ENCODE measurements at regions of chr12 and their contacts with region 1.

Region 1: DNA sequence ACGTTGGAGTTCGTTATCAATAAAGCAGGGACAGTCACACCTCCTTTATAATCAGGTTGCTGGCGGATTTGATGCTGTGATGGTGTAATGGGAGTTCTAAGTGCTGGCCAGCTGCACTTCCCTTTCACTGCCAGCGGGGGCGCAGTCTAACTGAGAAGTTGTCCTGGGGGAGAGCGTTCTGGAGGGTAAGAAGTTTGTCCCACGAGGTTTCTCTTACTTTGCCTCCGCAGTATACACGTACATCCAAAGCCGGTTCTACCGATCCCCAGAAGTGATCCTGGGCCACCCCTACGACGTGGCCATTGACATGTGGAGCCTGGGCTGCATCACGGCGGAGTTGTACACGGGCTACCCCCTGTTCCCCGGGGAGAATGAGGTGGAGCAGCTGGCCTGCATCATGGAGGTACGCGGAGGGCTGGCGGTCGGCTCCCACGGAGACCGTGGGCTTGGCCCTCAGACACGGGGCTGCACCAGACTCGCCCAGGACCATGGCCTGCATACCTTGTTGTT is 42.7 kb downstream of the DYRK4 start:
- DNase-seq: peak; percentile 89
- ATAC-seq: peak; percentile 96
- H3K4me3 Mint-ChIP-seq: peak overlapping the region; percentile 98
- H3K27ac Mint-ChIP-seq: peak overlapping the region; percentile 87
- H3K4me1 Mint-ChIP-seq: peaks cover 16% of the 10 kb centered on the region
- H3K27me3 Mint-ChIP-seq: peaks cover 17% of the 10 kb centered on the region

Region 2: GRCh38 chr12:4068981-4069669 is 535.6 kb before region 1 on chr12:
- CTCF ChIA-PET with region 1: no interaction called
- DNase-seq: no peak
- ATAC-seq: no peak
- H3K4me3 Mint-ChIP-seq: no peak overlapping the region
- H3K27ac Mint-ChIP-seq: no peak overlapping the region
- H3K4me1 Mint-ChIP-seq: peaks cover 5% of the 10 kb centered on the region
- H3K27me3 Mint-ChIP-seq: peaks cover 9% of the 10 kb centered on the region

Region 3: GRCh38 chr12:4518106-4518728 is 86.5 kb before region 1 on chr12:
- CTCF ChIA-PET with region 1: no interaction called
- DNase-seq: no peak
- ATAC-seq: no peak
- H3K4me3 Mint-ChIP-seq: no peak overlapping the region
- H3K27ac Mint-ChIP-seq: no peak overlapping the region
- H3K4me1 Mint-ChIP-seq: no peaks in the 10 kb centered on the region
- H3K27me3 Mint-ChIP-seq: no peaks in the 10 kb centered on the region

Region 4: GRCh38 chr12:4591180-4591687 is 13.5 kb before region 1 on chr12:
- CTCF ChIA-PET with region 1: interaction called, 24 read pairs
- DNase-seq: no peak
- ATAC-seq: no peak
- H3K4me3 Mint-ChIP-seq: no peak overlapping the region
- H3K27ac Mint-ChIP-seq: no peak overlapping the region
- H3K4me1 Mint-ChIP-seq: no peaks in the 10 kb centered on the region
- H3K27me3 Mint-ChIP-seq: peaks cover 5% of the 10 kb centered on the region

Region 5: DNA sequence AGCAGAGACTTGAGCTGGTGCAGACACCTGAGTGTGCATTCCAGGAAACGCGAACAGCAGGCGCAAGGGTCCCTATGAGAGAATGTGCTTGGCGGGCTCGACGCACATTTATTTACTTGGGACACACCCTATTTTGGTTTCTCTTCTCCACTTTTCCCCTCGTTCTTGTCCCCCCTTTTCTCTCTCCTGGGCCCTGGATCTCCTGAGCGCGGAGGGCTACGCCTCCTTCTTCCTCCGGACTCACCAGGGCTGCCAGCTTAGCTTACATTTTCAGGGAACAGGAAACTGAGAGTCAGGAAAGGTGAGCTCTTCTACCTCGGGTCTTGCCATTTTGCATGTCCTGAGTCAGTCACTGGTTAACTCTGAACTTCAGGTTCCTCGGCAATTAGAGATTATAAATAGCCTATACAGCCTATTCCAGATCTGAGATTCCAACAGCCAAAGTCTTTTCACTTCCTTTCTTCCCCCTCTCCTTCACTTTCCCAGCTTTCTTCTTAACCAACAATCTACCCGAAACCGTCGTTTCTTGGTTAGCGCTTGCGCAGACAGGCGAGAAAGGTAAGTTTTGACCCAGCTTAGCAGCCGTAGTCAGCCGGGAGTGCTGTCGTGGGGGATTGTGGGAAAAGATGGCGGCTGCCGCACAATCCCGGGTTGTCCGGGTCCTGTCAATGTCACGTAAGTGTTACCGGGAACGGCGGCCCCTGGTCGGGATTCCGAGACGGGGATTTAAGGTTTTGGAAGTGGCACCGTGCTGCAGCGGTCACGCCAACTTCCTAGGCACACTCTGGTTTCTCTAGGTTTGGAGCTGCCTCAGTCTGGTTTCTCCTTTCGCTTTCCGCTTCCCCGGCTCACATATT is 44.0 kb after region 1 on chr12 and contains the starts of genes AKAP3 and NDUFA9:
- CTCF ChIA-PET with region 1: interaction called, 14 read pairs
- DNase-seq: peak; percentile 90
- ATAC-seq: peak; percentile 96
- H3K4me3 Mint-ChIP-seq: peak within 1 kb of the TSS; percentile 90
- H3K27ac Mint-ChIP-seq: peak within 1 kb of the TSS; percentile 88
- H3K4me1 Mint-ChIP-seq: peaks cover 46% of the 10 kb centered on the region
- H3K27me3 Mint-ChIP-seq: peaks cover 2% of the 10 kb centered on the region
- total RNA-seq, gene AKAP3: 2.6 to 3.5 TPM
- total RNA-seq, gene NDUFA9: 122 to 125 TPM

Region 6: GRCh38 chr12:4763549-4763948 is 158.8 kb after region 1 on chr12:
- CTCF ChIA-PET with region 1: interaction called, 12 read pairs
- DNase-seq: no peak
- ATAC-seq: no peak
- H3K4me3 Mint-ChIP-seq: no peak overlapping the region
- H3K27ac Mint-ChIP-seq: no peak overlapping the region
- H3K4me1 Mint-ChIP-seq: peaks cover 9% of the 10 kb centered on the region
- H3K27me3 Mint-ChIP-seq: no peaks in the 10 kb centered on the region

Measured in activated CD8-positive, alpha-beta memory T cell treated with anti-CD3 and anti-CD28 coated beads, Interleukin-2, amount 10 ng/mL, durations not matched to agents 7 days and 5 days (primary cell).